ENCODE measurements at regions of chr5 and their contacts with region 1.

Region 1: GRCh38 chr5:127492854-127493738 is 24.3 kb upstream of the PRRC1 start:
- DNase-seq: peak; percentile 54
- ATAC-seq: peak; percentile 78; the same call in 1 of the 2 replicates
- H3K4me3 ChIP-seq: no peak overlapping the region
- H3K27ac ChIP-seq: no peak overlapping the region
- H3K4me1 ChIP-seq: no peaks in the 10 kb centered on the region
- H3K27me3 ChIP-seq: peaks cover 9% of the 10 kb centered on the region
- CTCF ChIP-seq: peak; percentile 79; the same call in 1 of the 2 replicates

Region 2: GRCh38 chr5:127223256-127223974 is 269.7 kb before region 1 on chr5:
- CTCF ChIA-PET with region 1: no interaction called
- POLR2A ChIA-PET with region 1: no interaction called
- in situ Hi-C with region 1: no loop called
- intact Hi-C with region 1: no loop called
- DNase-seq: no peak
- ATAC-seq: no peak
- H3K4me3 ChIP-seq: no peak overlapping the region
- H3K27ac ChIP-seq: no peak overlapping the region
- H3K4me1 ChIP-seq: no peaks in the 10 kb centered on the region
- H3K27me3 ChIP-seq: no peaks in the 10 kb centered on the region; the same call in 1 of the 2 replicates
- CTCF ChIP-seq: no peak

Region 3: GRCh38 chr5:127290019-127290945 is 202.8 kb before region 1 on chr5 and contains the start of gene MEGF10:
- CTCF ChIA-PET with region 1: interaction called, 4 read pairs
- POLR2A ChIA-PET with region 1: no interaction called
- in situ Hi-C with region 1: no loop called
- intact Hi-C with region 1: loop called (anchors 1 kb)
- DNase-seq: no peak
- ATAC-seq: peak; percentile 92
- H3K4me3 ChIP-seq: peak within 1 kb of the TSS; percentile 19 to 21; a peak in 2 of 4 replicates
- H3K27ac ChIP-seq: no peak within 1 kb of the TSS
- H3K4me1 ChIP-seq: peaks cover 4% of the 10 kb centered on the region; the same call in 1 of the 2 replicates
- H3K27me3 ChIP-seq: peaks cover 20% of the 10 kb centered on the region
- CTCF ChIP-seq: peak; percentile 80
- total RNA-seq, gene MEGF10: not detected

Region 4: DNA sequence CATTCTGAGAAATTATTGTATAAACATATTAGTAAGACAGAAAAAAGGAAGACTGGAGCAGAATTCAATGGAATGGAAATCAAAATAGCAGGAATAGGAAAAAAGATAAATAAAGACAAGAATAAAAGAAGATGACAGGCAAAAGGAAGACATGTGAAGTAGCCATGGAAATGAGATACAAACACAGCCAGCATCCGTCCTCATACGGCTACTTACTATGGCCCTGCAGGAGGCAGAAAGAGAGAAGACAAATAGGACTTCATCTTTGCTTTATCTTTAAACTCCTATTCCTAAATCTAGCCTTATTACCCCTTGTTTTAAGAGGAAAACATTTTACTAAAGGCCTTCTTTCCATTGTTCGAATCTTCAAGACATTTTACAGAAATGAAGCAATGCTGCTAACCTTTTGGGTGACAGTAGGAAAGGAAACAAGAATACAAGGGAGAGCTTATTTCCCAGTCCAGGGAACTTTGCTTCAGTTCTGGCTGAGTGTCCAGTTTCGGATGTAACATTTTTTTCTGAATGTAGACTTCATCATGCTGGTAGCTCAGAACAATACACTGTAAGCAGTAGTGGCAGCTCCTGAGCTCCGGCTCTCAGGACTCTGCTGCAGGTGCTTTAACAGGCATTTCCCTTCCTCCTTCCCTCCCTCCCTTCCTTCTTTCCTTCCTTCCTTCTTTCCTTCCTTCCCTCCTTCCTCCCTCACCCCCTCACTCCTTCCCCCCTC is 484.1 kb after region 1 on chr5:
- CTCF ChIA-PET with region 1: interaction called, 19 read pairs
- POLR2A ChIA-PET with region 1: no interaction called
- in situ Hi-C with region 1: no loop called
- intact Hi-C with region 1: no loop called
- DNase-seq: no peak
- ATAC-seq: no peak
- H3K4me3 ChIP-seq: no peak overlapping the region
- H3K27ac ChIP-seq: no peak overlapping the region
- H3K4me1 ChIP-seq: no peaks in the 10 kb centered on the region
- H3K27me3 ChIP-seq: no peaks in the 10 kb centered on the region
- CTCF ChIP-seq: no peak